ENCODE measurements at regions of chr22 and their contacts with region 1.

Region 1: GRCh38 chr22:50293441-50294318 is 13.8 kb downstream of the PLXNB2 start:
- DNase-seq: peak; percentile 85
- ATAC-seq: peak; percentile 89
- H3K4me3 Mint-ChIP-seq: no peak overlapping the region
- H3K27ac Mint-ChIP-seq: peak overlapping the region; percentile 72; the same call in 1 of the 2 replicates
- H3K4me1 Mint-ChIP-seq: peaks cover 27% of the 10 kb centered on the region
- H3K27me3 Mint-ChIP-seq: no peaks in the 10 kb centered on the region
- CTCF ChIP-seq: no peak

Region 2: GRCh38 chr22:50173311-50173982 is 120.2 kb before region 1 on chr22:
- CTCF ChIA-PET with region 1: no interaction called
- POLR2A ChIA-PET with region 1: no interaction called
- DNase-seq: no peak
- ATAC-seq: no peak
- H3K4me3 Mint-ChIP-seq: no peak overlapping the region
- H3K27ac Mint-ChIP-seq: no peak overlapping the region
- H3K4me1 Mint-ChIP-seq: peaks cover 3% of the 10 kb centered on the region; the same call in 1 of the 2 replicates
- H3K27me3 Mint-ChIP-seq: peaks cover 15% of the 10 kb centered on the region
- CTCF ChIP-seq: no peak

Region 3: GRCh38 chr22:50306753-50307749 is 13.4 kb after region 1 on chr22 and contains the start of gene PLXNB2:
- CTCF ChIA-PET with region 1: interaction called, 16 read pairs
- POLR2A ChIA-PET with region 1: interaction called, 10 read pairs
- DNase-seq: peak; percentile 73
- ATAC-seq: peak; percentile 31
- H3K4me3 Mint-ChIP-seq: peak within 1 kb of the TSS; percentile 35
- H3K27ac Mint-ChIP-seq: no peak within 1 kb of the TSS
- H3K4me1 Mint-ChIP-seq: peaks cover 29% of the 10 kb centered on the region
- H3K27me3 Mint-ChIP-seq: peaks cover 6% of the 10 kb centered on the region; the same call in 1 of the 2 replicates
- CTCF ChIP-seq: no peak
- total RNA-seq, gene PLXNB2: 110 to 113 TPM (median 111 TPM) in 3 replicates

Measured in WTC11 (cell line).